HCT116 (cell line): ENCODE measurements at regions of chrX and their contacts with region 1.

Region 1: DNA sequence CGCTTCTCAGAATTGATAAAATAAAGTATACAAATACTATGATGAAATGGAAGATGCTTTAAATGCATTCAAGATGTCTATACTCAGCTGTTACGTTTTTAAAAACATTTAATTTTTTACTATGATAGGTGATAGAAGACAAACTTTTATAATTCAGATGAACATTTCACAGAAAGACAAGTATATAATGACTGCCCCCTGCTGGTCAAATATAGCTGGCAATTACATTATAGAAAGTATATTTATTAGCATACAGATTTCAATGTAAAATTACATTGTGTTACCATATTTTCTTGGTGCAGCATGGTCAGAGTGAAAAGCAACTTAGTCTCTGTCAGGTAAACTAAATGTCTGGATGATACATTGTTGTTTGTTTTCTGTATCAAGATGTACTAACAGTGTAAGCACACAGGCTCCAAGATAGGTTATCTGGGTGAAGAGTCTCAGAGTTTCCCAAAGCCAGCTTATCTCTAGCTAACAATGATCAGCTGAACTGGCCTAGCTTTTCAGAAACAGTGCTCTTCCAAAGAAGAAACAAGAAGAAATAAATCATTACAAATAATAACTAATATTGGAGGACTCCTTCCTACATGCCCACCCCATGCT is 54.1 kb downstream of the SRPX start:
- DNase-seq: peak; percentile 3
- ATAC-seq: no peak
- H3K4me3 ChIP-seq: no peak overlapping the region
- H3K27ac ChIP-seq: no peak overlapping the region
- H3K4me1 ChIP-seq: no peaks in the 10 kb centered on the region
- H3K27me3 ChIP-seq: no peaks in the 10 kb centered on the region
- CTCF ChIP-seq: peak; percentile 31 to 63 (median 33); a peak in 4 of 6 replicates
- POLR2A ChIP-seq: no peak
- RAD21 ChIP-seq: peak; percentile 65

Region 2: DNA sequence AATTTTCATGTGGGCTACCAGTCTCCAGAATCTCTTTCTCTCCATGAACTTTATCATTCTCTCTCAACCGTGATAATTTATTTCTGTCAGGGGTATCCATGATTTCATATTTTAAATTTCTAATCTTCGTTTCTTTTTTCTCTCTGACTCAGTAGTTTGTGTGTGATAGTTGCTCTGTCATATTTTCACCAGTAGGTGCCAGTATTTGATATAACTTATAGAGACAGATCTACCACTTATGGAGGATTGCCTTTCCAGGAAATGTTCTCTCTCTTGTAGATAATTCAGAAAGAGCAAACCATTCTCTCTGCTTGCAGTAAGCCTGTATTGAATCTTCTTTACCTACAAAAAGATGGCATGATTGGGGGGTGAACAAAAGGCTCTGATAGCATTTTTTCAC is 239.9 kb before region 1 on chrX:
- CTCF ChIA-PET with region 1: interaction called, 18 read pairs
- POLR2A ChIA-PET with region 1: no interaction called
- RAD21 ChIA-PET with region 1: no interaction called
- intact Hi-C with region 1: loop called (anchors 1 kb)
- DNase-seq: no peak
- ATAC-seq: peak; percentile 67
- H3K4me3 ChIP-seq: no peak overlapping the region
- H3K27ac ChIP-seq: no peak overlapping the region
- H3K4me1 ChIP-seq: peaks cover 0 to 6% of the 10 kb centered on the region in 2 experiments; a peak in 1 of 4 replicates
- H3K27me3 ChIP-seq: no peaks in the 10 kb centered on the region
- CTCF ChIP-seq: peak; percentile 28 to 54 (median 46); a peak in 5 of 6 replicates
- POLR2A ChIP-seq: no peak
- RAD21 ChIP-seq: peak; percentile 67

Region 3: DNA sequence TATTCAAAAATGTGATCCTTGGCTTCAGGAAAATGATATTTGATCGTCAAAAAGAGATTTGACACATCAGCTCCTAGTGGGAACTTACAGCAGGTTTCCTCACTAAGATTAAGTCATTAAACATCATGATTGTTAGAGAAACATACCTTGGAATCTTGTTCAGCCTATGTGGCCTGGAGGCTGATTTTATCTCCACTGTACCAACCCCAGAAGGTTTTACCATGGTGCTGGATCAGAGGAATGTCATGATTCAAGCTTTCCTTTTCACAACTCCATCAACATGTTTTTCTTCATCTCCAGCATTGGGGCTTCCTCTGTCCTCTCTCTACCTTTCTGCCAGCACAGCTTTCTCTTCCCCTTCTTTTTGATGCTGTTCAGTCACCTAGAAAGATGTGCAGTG is 566.3 kb after region 1 on chrX:
- CTCF ChIA-PET with region 1: no interaction called
- POLR2A ChIA-PET with region 1: no interaction called
- RAD21 ChIA-PET with region 1: no interaction called
- intact Hi-C with region 1: no loop called
- DNase-seq: no peak
- ATAC-seq: no peak
- H3K4me3 ChIP-seq: no peak overlapping the region
- H3K27ac ChIP-seq: no peak overlapping the region
- H3K4me1 ChIP-seq: no peaks in the 10 kb centered on the region
- H3K27me3 ChIP-seq: no peaks in the 10 kb centered on the region
- CTCF ChIP-seq: no peak
- POLR2A ChIP-seq: no peak
- RAD21 ChIP-seq: no peak